ENCODE measurements at regions of chr12 and their contacts with region 1.

Region 1: GRCh38 chr12:95336390-95337067 is 118.9 kb downstream of the VEZT start:
- DNase-seq: peak; percentile 80 to 85
- H3K4me3 ChIP-seq: no peak overlapping the region
- H3K27ac ChIP-seq: peak overlapping the region in 2 of 3 donors; percentile 63 to 73
- H3K4me1 ChIP-seq: peaks cover 7 to 14% of the 10 kb centered on the region in 2 donors
- H3K27me3 ChIP-seq: no peaks in the 10 kb centered on the region
- CTCF ChIP-seq: peak; percentile 52 to 99 (median 87)
- POLR2A ChIP-seq: no peak

Region 2: GRCh38 chr12:94545935-94546771 is 790.4 kb before region 1 on chr12:
- intact Hi-C with region 1: loop called (anchors 5 kb)
- DNase-seq: peak; percentile 67 to 70
- H3K4me3 ChIP-seq: no peak overlapping the region
- H3K27ac ChIP-seq: no peak overlapping the region
- H3K4me1 ChIP-seq: peaks cover 0 to 7% of the 10 kb centered on the region in 2 donors
- H3K27me3 ChIP-seq: no peaks in the 10 kb centered on the region
- CTCF ChIP-seq: peak; percentile 60 to 97 (median 89)
- POLR2A ChIP-seq: no peak

Region 3: DNA sequence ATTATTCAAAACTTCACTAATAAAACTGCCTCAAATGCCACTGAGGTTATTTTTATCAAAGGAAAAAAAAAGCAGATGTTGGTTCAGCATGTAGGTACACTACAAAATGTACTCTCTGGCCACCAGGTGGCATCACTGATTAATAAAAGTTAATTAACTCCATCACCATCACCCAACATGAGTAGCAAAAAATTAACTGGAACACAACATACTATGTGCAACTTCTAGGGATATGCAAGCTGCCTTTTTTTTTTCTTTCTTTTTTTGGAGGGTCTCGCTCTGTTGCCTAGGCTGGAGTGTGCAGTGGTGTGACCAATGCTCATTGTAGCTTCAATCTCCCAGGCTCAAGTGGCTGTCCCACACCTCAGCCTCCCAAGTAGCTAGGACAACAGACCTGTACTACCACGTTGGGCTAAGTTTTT is 219.3 kb before region 1 on chr12:
- intact Hi-C with region 1: loop called (anchors 2 kb)
- DNase-seq: peak; percentile 69 to 77
- H3K4me3 ChIP-seq: no peak overlapping the region
- H3K27ac ChIP-seq: peak overlapping the region in 2 of 3 donors; percentile 71 to 86
- H3K4me1 ChIP-seq: peaks cover 18 to 28% of the 10 kb centered on the region in 2 donors
- H3K27me3 ChIP-seq: no peaks in the 10 kb centered on the region
- CTCF ChIP-seq: peak; percentile 15 to 93 (median 70)
- POLR2A ChIP-seq: no peak

Region 4: GRCh38 chr12:95532851-95533250 is 196.3 kb after region 1 on chr12:
- intact Hi-C with region 1: loop called (anchors 10 kb)
- DNase-seq: no peak
- H3K4me3 ChIP-seq: no peak overlapping the region
- H3K27ac ChIP-seq: no peak overlapping the region
- H3K4me1 ChIP-seq: peaks cover 5 to 9% of the 10 kb centered on the region in 2 donors
- H3K27me3 ChIP-seq: no peaks in the 10 kb centered on the region
- CTCF ChIP-seq: no peak
- POLR2A ChIP-seq: no peak

Region 5: DNA sequence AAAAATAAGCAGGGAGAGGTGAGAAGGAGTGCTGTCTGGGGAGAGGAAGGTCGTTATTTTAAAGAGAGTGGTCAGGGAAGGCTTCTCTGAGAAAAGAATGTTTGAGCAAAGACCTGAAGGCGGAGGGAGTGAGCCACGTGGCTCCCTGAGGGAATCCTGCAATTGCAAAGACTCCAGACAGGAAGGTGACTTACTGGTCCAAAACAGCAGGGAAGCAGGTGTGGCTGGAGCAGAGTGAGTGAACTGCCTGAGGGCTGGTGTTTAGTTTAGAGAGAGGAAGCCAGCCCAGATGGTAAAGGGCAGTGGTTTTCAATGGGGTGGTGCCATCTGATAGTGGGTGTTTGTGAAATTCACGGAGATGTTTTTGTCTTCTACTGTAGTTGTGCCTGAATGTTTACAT is 757.7 kb after region 1 on chr12:
- intact Hi-C with region 1: no loop called
- DNase-seq: no peak
- H3K4me3 ChIP-seq: no peak overlapping the region
- H3K27ac ChIP-seq: no peak overlapping the region
- H3K4me1 ChIP-seq: no peaks in the 10 kb centered on the region
- H3K27me3 ChIP-seq: no peaks in the 10 kb centered on the region
- CTCF ChIP-seq: no peak
- POLR2A ChIP-seq: no peak